Breast epithelium (tissue), 4 donors: ENCODE measurements at regions of chr12 and their contacts with region 1.

Region 1: GRCh38 chr12:3489057-3489456 is 1.9 kb upstream of the PRMT8 start:
- DNase-seq: no peak
- H3K4me3 ChIP-seq: no peak overlapping the region
- H3K27ac ChIP-seq: no peak overlapping the region
- H3K4me1 ChIP-seq: peaks cover 0 to 7% of the 10 kb centered on the region in 2 donors
- H3K27me3 ChIP-seq: peaks cover 5 to 61% of the 10 kb centered on the region in 2 donors
- CTCF ChIP-seq: no peak
- POLR2A ChIP-seq: no peak

Region 2: GRCh38 chr12:2853626-2854025 is 635.4 kb before region 1 on chr12:
- intact Hi-C with region 1: loop called (anchors 10 kb)
- DNase-seq: peak; percentile 45 to 80
- H3K4me3 ChIP-seq: no peak overlapping the region
- H3K27ac ChIP-seq: no peak overlapping the region
- H3K4me1 ChIP-seq: no peaks in the 10 kb centered on the region
- H3K27me3 ChIP-seq: no peaks in the 10 kb centered on the region
- CTCF ChIP-seq: peak; percentile 31 to 69 (median 66)
- POLR2A ChIP-seq: no peak

Region 3: GRCh38 chr12:3236345-3237187 is 252.5 kb before region 1 on chr12:
- intact Hi-C with region 1: no loop called
- DNase-seq: no peak
- H3K4me3 ChIP-seq: no peak overlapping the region
- H3K27ac ChIP-seq: no peak overlapping the region
- H3K4me1 ChIP-seq: no peaks in the 10 kb centered on the region
- H3K27me3 ChIP-seq: no peaks in the 10 kb centered on the region
- CTCF ChIP-seq: no peak
- POLR2A ChIP-seq: no peak